Activated CD8-positive, alpha-beta T cell treated with anti-CD3 and anti-CD28 coated beads for 36 hours (primary cell): ENCODE measurements at regions of chr11 and their contacts with region 1.

Region 1: GRCh38 chr11:11028017-11028692 is 170.3 kb upstream of the ZBED5 start:
- DNase-seq: peak; percentile 85
- ATAC-seq: peak; percentile 93
- H3K4me3 Mint-ChIP-seq: no peak overlapping the region
- H3K27ac Mint-ChIP-seq: no peak overlapping the region
- H3K4me1 Mint-ChIP-seq: no peaks in the 10 kb centered on the region
- H3K27me3 Mint-ChIP-seq: no peaks in the 10 kb centered on the region
- CTCF ChIP-seq: peak; percentile 89

Region 2: DNA sequence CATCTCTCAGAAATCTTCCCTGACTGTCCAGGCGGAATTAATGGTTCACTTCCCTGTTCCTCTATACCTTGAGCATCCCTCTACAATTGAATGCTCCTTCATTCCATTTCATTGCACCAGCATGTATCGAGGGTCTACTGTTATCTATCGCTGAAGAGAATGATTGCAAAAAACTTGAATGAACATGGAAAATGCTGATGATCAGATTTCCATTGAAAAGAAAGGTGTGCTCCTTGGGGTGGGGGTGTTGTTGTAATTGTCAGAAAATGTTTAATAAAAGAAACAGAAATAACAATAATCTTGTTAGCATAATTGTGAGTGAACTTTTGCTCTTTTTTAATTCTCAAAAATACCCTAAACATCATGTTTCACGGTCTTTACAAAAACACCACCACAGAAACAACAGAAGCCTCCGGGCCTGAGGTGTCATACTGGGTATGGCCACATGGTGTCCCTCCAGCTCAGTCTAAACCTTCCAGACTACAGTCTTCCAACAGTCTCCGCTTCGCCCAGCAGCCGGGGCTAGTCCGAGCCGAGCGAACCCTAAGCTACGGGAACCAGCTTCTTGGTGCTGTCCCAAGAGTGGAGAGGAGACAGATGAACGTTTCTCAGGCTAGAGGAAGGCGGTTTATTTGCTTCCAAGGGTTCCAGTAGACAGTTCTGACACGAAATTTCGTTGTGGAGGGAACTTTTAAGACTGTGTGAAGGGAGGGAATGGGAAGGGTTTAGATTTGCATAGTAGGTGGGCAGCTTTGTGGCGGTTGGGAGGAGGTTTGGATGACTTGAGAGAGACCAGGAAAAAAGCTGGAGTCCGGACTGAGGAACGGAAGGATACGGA is 94.5 kb before region 1 on chr11:
- CTCF ChIA-PET with region 1: interaction called, 82 read pairs
- POLR2A ChIA-PET with region 1: no interaction called
- intact Hi-C with region 1: loop called (anchors 1 kb)
- DNase-seq: peak; percentile 91
- ATAC-seq: peak; percentile 93
- H3K4me3 Mint-ChIP-seq: peak overlapping the region; percentile 72
- H3K27ac Mint-ChIP-seq: no peak overlapping the region
- H3K4me1 Mint-ChIP-seq: peaks cover 8% of the 10 kb centered on the region
- H3K27me3 Mint-ChIP-seq: peaks cover 31% of the 10 kb centered on the region
- CTCF ChIP-seq: peak; percentile 94

Region 3: GRCh38 chr11:11010624-11011127 is 17.5 kb before region 1 on chr11:
- CTCF ChIA-PET with region 1: interaction called, 16 read pairs
- POLR2A ChIA-PET with region 1: no interaction called
- intact Hi-C with region 1: no loop called
- DNase-seq: no peak
- ATAC-seq: no peak
- H3K4me3 Mint-ChIP-seq: no peak overlapping the region
- H3K27ac Mint-ChIP-seq: no peak overlapping the region
- H3K4me1 Mint-ChIP-seq: no peaks in the 10 kb centered on the region
- H3K27me3 Mint-ChIP-seq: peaks cover 23% of the 10 kb centered on the region
- CTCF ChIP-seq: no peak

Region 4: DNA sequence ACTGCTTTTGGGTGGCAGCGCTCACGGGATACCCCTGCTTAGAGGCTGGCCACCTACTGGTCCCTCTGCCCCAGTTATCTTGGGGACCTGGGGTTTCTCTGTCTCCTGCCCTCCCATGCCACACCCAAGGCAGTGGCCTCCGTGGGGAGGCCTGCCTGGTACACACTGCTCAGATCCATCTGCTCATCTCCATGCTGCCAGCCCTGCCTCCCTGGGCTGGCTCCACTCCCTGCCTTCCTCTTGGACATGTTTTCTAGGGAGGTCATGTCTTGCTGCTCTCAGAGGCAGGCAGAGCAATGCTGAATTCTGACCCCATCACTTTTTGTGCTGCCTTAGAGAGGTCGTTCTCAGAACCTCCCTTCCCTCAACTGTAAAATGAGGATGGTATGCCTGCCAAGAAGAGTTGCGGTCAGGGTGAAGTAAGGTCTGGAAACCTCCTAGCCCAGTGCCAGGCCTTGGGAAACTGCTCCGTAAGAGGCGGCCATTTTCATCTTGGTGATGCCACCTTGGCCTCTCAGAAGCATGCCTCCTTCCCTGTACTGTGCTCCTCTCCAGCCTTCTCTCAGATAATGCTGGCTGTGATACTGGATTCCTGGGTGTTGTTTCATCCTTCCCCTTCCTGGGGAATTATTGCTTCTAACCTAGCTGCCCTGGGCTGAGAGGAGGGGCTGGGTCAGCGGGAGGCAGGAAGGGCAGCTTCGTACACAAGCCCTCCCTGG is 16.1 kb after region 1 on chr11:
- CTCF ChIA-PET with region 1: interaction called, 58 read pairs
- POLR2A ChIA-PET with region 1: no interaction called
- intact Hi-C with region 1: no loop called
- DNase-seq: no peak
- ATAC-seq: no peak
- H3K4me3 Mint-ChIP-seq: no peak overlapping the region
- H3K27ac Mint-ChIP-seq: no peak overlapping the region
- H3K4me1 Mint-ChIP-seq: no peaks in the 10 kb centered on the region
- H3K27me3 Mint-ChIP-seq: no peaks in the 10 kb centered on the region
- CTCF ChIP-seq: no peak

Region 5: DNA sequence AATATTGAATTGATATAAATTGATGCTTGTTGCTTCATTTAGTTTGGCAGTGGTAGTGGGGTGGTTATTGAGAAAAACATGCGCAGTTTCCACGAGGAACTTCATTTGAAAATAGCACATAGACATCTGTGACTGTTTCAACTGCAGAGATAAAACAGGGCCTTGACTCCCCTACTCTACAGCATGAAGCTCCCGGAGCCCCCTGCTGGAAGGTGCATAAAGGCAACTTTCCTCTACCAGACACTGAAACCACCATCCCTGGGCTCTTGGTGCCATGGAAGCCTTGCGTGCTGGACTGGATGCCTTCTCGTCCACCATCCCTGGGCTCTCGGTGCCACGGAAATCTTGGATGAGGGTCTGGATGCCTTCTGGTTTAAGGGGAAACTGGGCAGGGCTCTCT is 129.0 kb after region 1 on chr11:
- CTCF ChIA-PET with region 1: interaction called, 45 read pairs
- POLR2A ChIA-PET with region 1: no interaction called
- intact Hi-C with region 1: no loop called
- DNase-seq: peak; percentile 64
- ATAC-seq: peak; percentile 47
- H3K4me3 Mint-ChIP-seq: no peak overlapping the region
- H3K27ac Mint-ChIP-seq: no peak overlapping the region
- H3K4me1 Mint-ChIP-seq: peaks cover 15% of the 10 kb centered on the region
- H3K27me3 Mint-ChIP-seq: no peaks in the 10 kb centered on the region
- CTCF ChIP-seq: peak; percentile 46